Activated CD4-positive, alpha-beta memory T cell treated with anti-CD3 and anti-CD28 coated beads, Interleukin-2, amount 10 ng/mL, durations not matched to agents 7 days and 5 days (primary cell): ENCODE measurements at regions of chr2 and their contacts with region 1.

Region 1: GRCh38 chr2:241702132-241703031 is 543 bp downstream of the ING5 start:
- DNase-seq: peak; percentile 85
- H3K4me3 Mint-ChIP-seq: peak overlapping the region; percentile 76
- H3K27ac Mint-ChIP-seq: peak overlapping the region; percentile 38
- H3K4me1 Mint-ChIP-seq: peaks cover 27% of the 10 kb centered on the region
- H3K27me3 Mint-ChIP-seq: no peaks in the 10 kb centered on the region

Region 2: GRCh38 chr2:241686649-241687425 is 15.5 kb before region 1 on chr2 and contains the start of gene DTYMK:
- CTCF ChIA-PET with region 1: interaction called, 54 read pairs
- POLR2A ChIA-PET with region 1: interaction called, 141 read pairs
- DNase-seq: peak; percentile 97
- H3K4me3 Mint-ChIP-seq: peak within 1 kb of the TSS; percentile 82
- H3K27ac Mint-ChIP-seq: peak within 1 kb of the TSS; percentile 90
- H3K4me1 Mint-ChIP-seq: peaks cover 40% of the 10 kb centered on the region
- H3K27me3 Mint-ChIP-seq: no peaks in the 10 kb centered on the region
- total RNA-seq, gene DTYMK: 54.8 to 57.7 TPM

Region 3: DNA sequence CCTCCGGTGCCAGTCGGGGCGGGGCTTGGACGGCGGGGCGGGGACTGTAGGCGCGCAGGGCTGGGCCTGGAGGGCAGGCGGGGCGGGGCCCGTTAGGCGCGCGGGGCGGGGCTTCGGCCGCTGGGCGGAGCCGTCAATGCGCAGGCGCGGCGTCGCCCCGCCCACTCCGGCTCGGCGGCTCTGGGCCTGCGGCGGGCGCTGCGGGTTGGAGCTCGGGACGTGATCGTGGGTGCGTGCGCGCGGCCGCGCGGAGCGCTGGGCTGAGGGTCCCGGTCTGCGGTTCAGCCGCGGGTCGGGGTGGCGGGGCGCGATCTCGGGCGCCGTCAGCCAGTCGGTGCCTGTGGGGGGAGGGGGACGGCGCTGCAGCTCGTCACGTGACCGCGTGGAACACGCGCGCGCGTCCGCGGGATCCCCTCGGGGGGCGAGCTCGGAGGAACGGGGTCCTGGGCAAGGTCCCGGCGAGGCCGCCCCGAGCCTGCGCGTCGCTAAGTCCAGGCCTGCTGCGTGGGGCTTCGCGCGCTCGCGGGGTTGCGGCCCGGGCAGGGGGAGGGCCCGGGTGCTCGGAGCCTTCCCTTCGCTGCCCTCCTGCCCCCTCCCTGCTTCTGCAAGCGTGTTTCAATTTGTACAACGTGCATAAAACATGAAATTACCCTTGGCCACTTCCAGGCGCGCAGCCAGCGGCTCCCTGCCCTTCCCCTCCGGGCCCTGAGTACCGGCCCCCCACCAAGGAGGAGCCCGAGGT is 32.3 kb after region 1 on chr2 and contains the start of gene D2HGDH:
- CTCF ChIA-PET with region 1: interaction called, 27 read pairs
- POLR2A ChIA-PET with region 1: interaction called, 27 read pairs
- DNase-seq: peak; percentile 95
- H3K4me3 Mint-ChIP-seq: peak within 1 kb of the TSS; percentile 80
- H3K27ac Mint-ChIP-seq: peak within 1 kb of the TSS; percentile 68
- H3K4me1 Mint-ChIP-seq: peaks cover 61% of the 10 kb centered on the region
- H3K27me3 Mint-ChIP-seq: peaks cover 1% of the 10 kb centered on the region
- total RNA-seq, gene D2HGDH: 24.6 to 25.0 TPM

Region 4: GRCh38 chr2:241762933-241763369 is 60.6 kb after region 1 on chr2:
- CTCF ChIA-PET with region 1: no interaction called
- POLR2A ChIA-PET with region 1: interaction called, 10 read pairs
- DNase-seq: peak; percentile 87
- H3K4me3 Mint-ChIP-seq: peak overlapping the region; percentile 45
- H3K27ac Mint-ChIP-seq: peak overlapping the region; percentile 92
- H3K4me1 Mint-ChIP-seq: peaks cover 53% of the 10 kb centered on the region
- H3K27me3 Mint-ChIP-seq: no peaks in the 10 kb centered on the region

Region 5: GRCh38 chr2:241788572-241788971 is 86.2 kb after region 1 on chr2:
- CTCF ChIA-PET with region 1: no interaction called
- POLR2A ChIA-PET with region 1: no interaction called
- DNase-seq: peak; percentile 39
- H3K4me3 Mint-ChIP-seq: no peak overlapping the region
- H3K27ac Mint-ChIP-seq: no peak overlapping the region
- H3K4me1 Mint-ChIP-seq: peaks cover 14% of the 10 kb centered on the region
- H3K27me3 Mint-ChIP-seq: peaks cover 18% of the 10 kb centered on the region

Region 6: DNA sequence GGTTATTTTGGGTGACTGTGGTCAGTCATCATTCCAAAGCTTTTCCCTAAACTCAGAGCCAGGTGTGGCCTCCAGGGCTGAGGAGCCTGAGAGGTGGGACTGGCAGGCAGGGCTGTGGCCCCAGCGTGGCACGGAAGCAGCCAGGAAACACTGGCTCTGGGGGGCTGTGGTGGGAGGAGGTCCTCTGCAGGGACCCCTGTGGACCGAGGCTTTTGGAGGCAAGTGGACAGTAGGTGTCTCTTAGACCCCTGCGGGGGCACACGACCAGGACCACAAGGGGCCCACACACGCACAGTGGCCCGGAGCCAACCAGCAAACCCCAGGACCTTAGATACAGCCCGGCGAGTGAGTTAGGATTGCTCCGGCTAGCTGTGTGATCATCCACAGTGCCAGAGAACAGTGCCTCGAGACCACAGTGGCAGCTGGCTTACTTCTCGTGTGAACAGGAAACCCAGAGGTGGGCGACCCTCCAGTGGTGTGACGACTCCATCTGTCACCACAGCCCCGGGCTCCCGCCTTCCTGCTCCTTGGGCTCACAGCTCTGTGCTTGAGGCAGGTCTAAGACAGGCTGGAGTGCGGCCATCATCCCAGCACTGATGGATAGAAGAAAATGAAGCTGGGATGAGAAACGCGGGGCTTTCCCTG is 165.5 kb after region 1 on chr2:
- CTCF ChIA-PET with region 1: interaction called, 3 read pairs
- POLR2A ChIA-PET with region 1: interaction called, 16 read pairs
- DNase-seq: peak; percentile 48
- H3K4me3 Mint-ChIP-seq: no peak overlapping the region
- H3K27ac Mint-ChIP-seq: no peak overlapping the region
- H3K4me1 Mint-ChIP-seq: peaks cover 64% of the 10 kb centered on the region
- H3K27me3 Mint-ChIP-seq: peaks cover 25% of the 10 kb centered on the region